ENCODE measurements at regions of chr3 and their contacts with region 1.

Region 1: GRCh38 chr3:98008855-98009254 is 26.3 kb downstream of the GABRR3 start:
- DNase-seq: no peak
- H3K4me3 Mint-ChIP-seq: peak overlapping the region; percentile 15
- H3K27ac Mint-ChIP-seq: no peak overlapping the region
- H3K4me1 Mint-ChIP-seq: peaks cover 43% of the 10 kb centered on the region
- H3K27me3 Mint-ChIP-seq: no peaks in the 10 kb centered on the region

Region 2: GRCh38 chr3:97991293-97991682 is 17.6 kb before region 1 on chr3:
- intact Hi-C with region 1: loop called (anchors 2 kb)
- DNase-seq: peak; percentile 78
- H3K4me3 Mint-ChIP-seq: peak overlapping the region; percentile 74
- H3K27ac Mint-ChIP-seq: peak overlapping the region; percentile 80
- H3K4me1 Mint-ChIP-seq: peaks cover 33% of the 10 kb centered on the region
- H3K27me3 Mint-ChIP-seq: no peaks in the 10 kb centered on the region

Region 3: GRCh38 chr3:98240131-98240530 is 231.3 kb after region 1 on chr3:
- intact Hi-C with region 1: no loop called
- DNase-seq: no peak
- H3K4me3 Mint-ChIP-seq: no peak overlapping the region
- H3K27ac Mint-ChIP-seq: no peak overlapping the region
- H3K4me1 Mint-ChIP-seq: no peaks in the 10 kb centered on the region
- H3K27me3 Mint-ChIP-seq: peaks cover 2% of the 10 kb centered on the region

Measured in activated CD4-positive, alpha-beta T cell treated with anti-CD3 and anti-CD28 coated beads, Interleukin-2, amount 10 ng/mL, durations not matched to agents 24 days and 14 days (primary cell).